Panc1 (cell line): ENCODE measurements at regions of chr12 and their contacts with region 1.

Region 1: DNA sequence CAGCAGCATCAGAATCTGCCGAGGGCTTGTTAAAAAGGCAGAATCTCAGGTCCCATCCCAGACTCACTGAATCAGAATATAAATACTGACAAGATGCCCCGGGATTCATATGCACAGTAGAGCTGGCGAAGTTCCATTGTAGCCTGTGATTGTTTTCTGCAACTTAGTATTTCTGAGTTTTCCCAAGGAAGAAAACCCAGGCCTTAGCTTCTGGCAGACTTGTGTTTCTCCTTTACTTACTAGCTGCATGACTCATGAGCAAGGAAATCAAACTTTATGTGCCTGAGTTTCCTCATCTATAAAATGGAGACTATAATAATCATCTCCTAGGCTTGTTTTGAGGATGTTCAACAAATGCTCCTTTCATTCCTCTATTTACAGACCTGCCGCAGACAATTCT is 278.5 kb upstream of the PLEKHG7 start:
- DNase-seq: no peak
- ATAC-seq: no peak
- H3K4me3 ChIP-seq: no peak overlapping the region
- H3K27ac ChIP-seq: no peak overlapping the region
- H3K4me1 ChIP-seq: no peaks in the 10 kb centered on the region
- H3K27me3 ChIP-seq: no peaks in the 10 kb centered on the region; the same call in 1 of the 2 replicates
- CTCF ChIP-seq: no peak

Region 2: DNA sequence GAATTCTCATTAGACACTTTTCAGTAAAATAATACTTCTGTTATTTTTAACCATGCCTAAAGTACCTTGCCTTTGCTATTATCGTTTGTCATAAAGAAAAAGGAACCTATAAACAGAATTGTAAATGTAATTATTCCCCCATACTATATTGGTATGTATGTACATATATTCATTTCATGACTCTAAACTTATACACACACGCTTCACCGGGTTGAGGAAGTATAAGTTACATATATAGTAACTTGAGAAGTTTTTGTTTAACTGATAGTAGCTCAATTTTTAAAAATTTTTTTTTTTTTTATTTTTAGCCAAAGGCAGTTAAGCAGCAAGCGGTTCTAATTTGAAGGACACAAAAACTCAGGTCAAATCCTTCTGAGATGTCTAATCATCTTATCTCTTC is 386.0 kb after region 1 on chr12:
- CTCF ChIA-PET with region 1: no interaction called
- POLR2A ChIA-PET with region 1: interaction called, 14 read pairs
- in situ Hi-C with region 1: no loop called
- intact Hi-C with region 1: no loop called
- DNase-seq: no peak
- ATAC-seq: no peak
- H3K4me3 ChIP-seq: no peak overlapping the region
- H3K27ac ChIP-seq: no peak overlapping the region
- H3K4me1 ChIP-seq: no peaks in the 10 kb centered on the region
- H3K27me3 ChIP-seq: no peaks in the 10 kb centered on the region
- CTCF ChIP-seq: no peak